ENCODE measurements at regions of chr19 and their contacts with region 1.

Region 1: DNA sequence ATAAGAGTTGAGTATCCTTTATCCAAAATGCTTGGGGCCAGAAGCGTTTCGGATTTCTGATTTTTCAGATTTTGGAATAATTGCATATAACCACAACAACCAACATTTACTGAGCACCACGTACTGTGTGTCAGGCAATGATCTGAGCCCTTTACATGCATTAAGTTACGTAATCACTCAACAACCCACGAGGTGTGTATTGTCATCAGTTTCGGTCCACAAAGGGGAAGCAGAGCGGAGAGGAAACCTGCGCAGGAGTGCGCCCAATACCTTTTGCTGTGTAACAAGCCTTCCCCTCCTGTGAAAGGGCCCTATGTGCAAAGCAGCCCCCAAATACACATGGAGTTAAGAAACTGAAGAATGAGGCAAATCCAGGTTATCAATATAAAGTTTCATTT is 20.7 kb upstream of the NLRP12 start:
- DNase-seq: no peak
- ATAC-seq: no peak

Region 2: DNA sequence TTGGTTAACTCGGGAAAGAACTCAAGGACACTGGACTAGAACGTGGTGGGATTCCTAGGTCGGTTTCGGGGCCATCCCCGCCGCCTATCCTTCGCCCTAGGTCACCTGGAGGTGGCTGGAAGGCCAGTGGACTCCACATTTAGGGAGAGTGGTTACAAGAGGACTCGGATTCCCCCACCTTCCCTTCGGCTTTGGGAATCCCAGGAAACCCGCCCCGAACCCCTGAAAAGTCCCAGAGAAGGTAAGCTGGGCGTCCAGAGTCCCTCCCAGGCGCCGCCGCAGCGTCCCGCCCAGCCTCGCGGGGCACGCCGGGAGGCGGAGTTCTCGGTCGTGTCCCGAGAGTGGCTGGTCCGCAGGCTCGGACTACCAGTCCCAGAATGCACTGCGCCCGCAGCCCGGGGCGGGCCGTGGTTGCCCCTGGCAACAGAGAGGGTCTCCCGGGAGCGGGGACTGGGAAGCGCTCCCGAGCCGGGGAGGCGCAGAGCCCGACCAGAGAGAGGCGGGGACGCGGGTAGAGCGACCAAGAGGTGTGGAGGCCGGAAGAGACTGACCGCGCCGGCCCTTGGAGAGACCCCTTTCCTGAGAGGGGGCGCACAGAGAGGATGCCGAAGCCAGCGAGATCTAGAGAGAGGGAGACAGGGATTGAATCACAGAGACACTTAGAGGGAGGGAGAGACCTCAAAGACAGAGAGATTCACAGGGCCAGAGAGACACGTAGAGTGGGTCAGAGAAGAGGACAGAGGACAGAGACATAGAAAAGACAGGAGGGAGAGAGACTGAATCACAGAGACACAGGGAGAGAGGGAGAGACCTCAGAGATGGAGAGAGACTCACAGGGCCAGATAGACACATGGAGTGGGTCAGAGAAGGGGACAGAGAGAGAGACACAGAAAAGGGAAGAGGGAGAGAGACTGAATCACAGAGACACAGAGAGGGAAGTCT is 34.6 kb after region 1 on chr19:
- intact Hi-C with region 1: loop called (anchors 1 kb)
- DNase-seq: peak; percentile 96
- ATAC-seq: peak; percentile 99

Region 3: GRCh38 chr19:53958168-53958571 is 113.3 kb after region 1 on chr19:
- intact Hi-C with region 1: no loop called
- DNase-seq: no peak
- ATAC-seq: no peak

Region 4: DNA sequence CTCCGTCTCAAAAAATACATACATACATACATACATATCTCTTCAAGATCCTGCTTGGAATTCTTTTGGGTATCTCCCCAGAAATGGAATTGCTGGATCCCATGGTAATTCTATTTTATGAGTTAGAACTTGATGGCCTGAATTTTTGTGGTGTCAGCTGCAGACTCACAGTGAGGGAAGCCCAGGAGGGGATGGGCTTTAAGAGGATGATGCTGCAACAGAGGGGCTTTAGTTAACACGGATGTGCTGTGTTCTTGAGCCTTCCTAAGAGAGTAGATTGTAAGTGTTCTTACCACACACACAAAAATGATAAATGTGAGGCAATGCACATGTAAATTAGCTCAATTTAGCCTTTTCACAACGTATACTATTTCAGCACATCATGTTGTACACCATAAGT is 178.3 kb after region 1 on chr19:
- intact Hi-C with region 1: loop called (anchors 1 kb)
- DNase-seq: no peak
- ATAC-seq: no peak